HCT116 (cell line): ENCODE measurements at regions of chr5 and their contacts with region 1.

Region 1: GRCh38 chr5:1011226-1011631 is 2.6 kb downstream of the NKD2 start:
- DNase-seq: no peak
- ATAC-seq: peak; percentile 70
- H3K4me3 ChIP-seq: no peak overlapping the region
- H3K27ac ChIP-seq: no peak overlapping the region
- H3K4me1 ChIP-seq: peaks cover 17 to 35% of the 10 kb centered on the region in 2 experiments
- H3K27me3 ChIP-seq: no peaks in the 10 kb centered on the region
- CTCF ChIP-seq: peak in 2 of 3 experiments; percentile 88 to 97; a peak in 4 of 6 replicates
- POLR2A ChIP-seq: no peak
- RAD21 ChIP-seq: no peak

Region 2: GRCh38 chr5:759111-759751 is 252.0 kb before region 1 on chr5:
- CTCF ChIA-PET with region 1: no interaction called
- POLR2A ChIA-PET with region 1: no interaction called
- RAD21 ChIA-PET with region 1: no interaction called
- intact Hi-C with region 1: no loop called
- DNase-seq: no peak
- ATAC-seq: no peak
- H3K4me3 ChIP-seq: no peak overlapping the region
- H3K27ac ChIP-seq: no peak overlapping the region
- H3K4me1 ChIP-seq: no peaks in the 10 kb centered on the region
- H3K27me3 ChIP-seq: no peaks in the 10 kb centered on the region
- CTCF ChIP-seq: no peak
- POLR2A ChIP-seq: no peak
- RAD21 ChIP-seq: no peak

Region 3: GRCh38 chr5:935510-936084 is 75.6 kb before region 1 on chr5:
- CTCF ChIA-PET with region 1: interaction called, 24 read pairs
- POLR2A ChIA-PET with region 1: no interaction called
- RAD21 ChIA-PET with region 1: interaction called in 1 of 2 experiments, 4 read pairs
- intact Hi-C with region 1: no loop called
- DNase-seq: no peak
- ATAC-seq: no peak
- H3K4me3 ChIP-seq: no peak overlapping the region
- H3K27ac ChIP-seq: no peak overlapping the region
- H3K4me1 ChIP-seq: no peaks in the 10 kb centered on the region
- H3K27me3 ChIP-seq: peaks cover 15% of the 10 kb centered on the region; the same call in 1 of the 2 replicates
- CTCF ChIP-seq: no peak
- POLR2A ChIP-seq: no peak
- RAD21 ChIP-seq: no peak

Region 4: DNA sequence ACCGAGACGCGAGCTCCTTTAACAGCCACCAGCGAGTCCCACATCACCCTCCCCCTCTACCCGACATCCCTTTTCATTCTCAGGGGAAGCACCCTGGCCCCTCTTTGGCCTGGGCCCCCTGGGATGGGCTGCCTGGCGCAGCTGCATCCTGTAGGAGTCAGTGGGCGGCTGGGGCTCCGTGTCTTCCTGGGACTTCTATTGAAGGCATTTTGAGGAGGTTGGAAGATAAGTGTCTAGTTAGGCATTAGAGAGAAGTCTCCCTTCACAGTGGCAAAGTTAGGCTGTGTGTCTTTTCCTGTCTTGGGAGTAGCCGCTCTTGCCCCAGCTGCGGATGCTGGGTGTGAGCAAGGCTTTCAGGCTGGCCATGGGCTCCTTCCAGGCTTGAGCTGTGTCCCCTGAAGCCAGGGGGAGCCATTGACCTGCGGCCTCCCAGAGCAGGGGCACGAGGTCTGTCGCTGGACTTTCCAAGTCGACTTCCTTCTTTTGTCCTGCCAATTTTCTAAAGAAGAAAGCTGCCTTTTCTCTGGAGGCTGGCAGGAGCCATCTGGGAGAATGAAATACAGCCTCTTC is 21.2 kb before region 1 on chr5:
- CTCF ChIA-PET with region 1: no interaction called
- POLR2A ChIA-PET with region 1: no interaction called
- RAD21 ChIA-PET with region 1: no interaction called
- intact Hi-C with region 1: no loop called
- DNase-seq: no peak
- ATAC-seq: no peak
- H3K4me3 ChIP-seq: no peak overlapping the region
- H3K27ac ChIP-seq: no peak overlapping the region
- H3K4me1 ChIP-seq: no peaks in the 10 kb centered on the region
- H3K27me3 ChIP-seq: no peaks in the 10 kb centered on the region; the same call in 1 of the 2 replicates
- CTCF ChIP-seq: peak in 2 of 3 experiments; percentile 20 to 30; a peak in 2 of 6 replicates
- POLR2A ChIP-seq: no peak
- RAD21 ChIP-seq: peak; percentile 61